ENCODE measurements at regions of chr3 and their contacts with region 1.

Region 1: GRCh38 chr3:142223282-142223681 is 2.1 kb downstream of the GK5 start:
- DNase-seq: no peak
- H3K4me3 ChIP-seq: no peak overlapping the region
- H3K27ac ChIP-seq: no peak overlapping the region
- H3K27me3 ChIP-seq: no peaks in the 10 kb centered on the region
- CTCF ChIP-seq: no peak

Region 2: GRCh38 chr3:141981084-141981483 is 242.2 kb before region 1 on chr3:
- CTCF ChIA-PET with region 1: no interaction called
- POLR2A ChIA-PET with region 1: no interaction called
- DNase-seq: no peak
- H3K4me3 ChIP-seq: no peak overlapping the region
- H3K27ac ChIP-seq: no peak overlapping the region
- H3K27me3 ChIP-seq: no peaks in the 10 kb centered on the region
- CTCF ChIP-seq: no peak

Region 3: GRCh38 chr3:142211035-142211434 is 12.2 kb before region 1 on chr3:
- CTCF ChIA-PET with region 1: interaction called, 10 read pairs
- POLR2A ChIA-PET with region 1: no interaction called
- DNase-seq: no peak
- H3K4me3 ChIP-seq: no peak overlapping the region
- H3K27ac ChIP-seq: no peak overlapping the region
- H3K27me3 ChIP-seq: no peaks in the 10 kb centered on the region
- CTCF ChIP-seq: peak; percentile 26; the same call in 1 of the 2 replicates